ENCODE measurements at regions of chr10 and their contacts with region 1.

Region 1: GRCh38 chr10:93074147-93074596 is 479 bp downstream of the CYP26A1 start:
- DNase-seq: no peak
- ATAC-seq: no peak
- H3K4me3 ChIP-seq: peak overlapping the region; percentile 29
- H3K27ac ChIP-seq: no peak overlapping the region
- H3K4me1 ChIP-seq: peaks cover 33% of the 10 kb centered on the region
- H3K27me3 ChIP-seq: peaks cover 63% of the 10 kb centered on the region
- CTCF ChIP-seq: no peak

Region 2: GRCh38 chr10:93293999-93294398 is 219.8 kb after region 1 on chr10:
- intact Hi-C with region 1: loop called (anchors 10 kb)
- DNase-seq: no peak
- ATAC-seq: no peak
- H3K4me3 ChIP-seq: no peak overlapping the region
- H3K27ac ChIP-seq: no peak overlapping the region
- H3K4me1 ChIP-seq: no peaks in the 10 kb centered on the region
- H3K27me3 ChIP-seq: no peaks in the 10 kb centered on the region
- CTCF ChIP-seq: no peak